ENCODE measurements at regions of chr11 and their contacts with region 1.

Region 1: DNA sequence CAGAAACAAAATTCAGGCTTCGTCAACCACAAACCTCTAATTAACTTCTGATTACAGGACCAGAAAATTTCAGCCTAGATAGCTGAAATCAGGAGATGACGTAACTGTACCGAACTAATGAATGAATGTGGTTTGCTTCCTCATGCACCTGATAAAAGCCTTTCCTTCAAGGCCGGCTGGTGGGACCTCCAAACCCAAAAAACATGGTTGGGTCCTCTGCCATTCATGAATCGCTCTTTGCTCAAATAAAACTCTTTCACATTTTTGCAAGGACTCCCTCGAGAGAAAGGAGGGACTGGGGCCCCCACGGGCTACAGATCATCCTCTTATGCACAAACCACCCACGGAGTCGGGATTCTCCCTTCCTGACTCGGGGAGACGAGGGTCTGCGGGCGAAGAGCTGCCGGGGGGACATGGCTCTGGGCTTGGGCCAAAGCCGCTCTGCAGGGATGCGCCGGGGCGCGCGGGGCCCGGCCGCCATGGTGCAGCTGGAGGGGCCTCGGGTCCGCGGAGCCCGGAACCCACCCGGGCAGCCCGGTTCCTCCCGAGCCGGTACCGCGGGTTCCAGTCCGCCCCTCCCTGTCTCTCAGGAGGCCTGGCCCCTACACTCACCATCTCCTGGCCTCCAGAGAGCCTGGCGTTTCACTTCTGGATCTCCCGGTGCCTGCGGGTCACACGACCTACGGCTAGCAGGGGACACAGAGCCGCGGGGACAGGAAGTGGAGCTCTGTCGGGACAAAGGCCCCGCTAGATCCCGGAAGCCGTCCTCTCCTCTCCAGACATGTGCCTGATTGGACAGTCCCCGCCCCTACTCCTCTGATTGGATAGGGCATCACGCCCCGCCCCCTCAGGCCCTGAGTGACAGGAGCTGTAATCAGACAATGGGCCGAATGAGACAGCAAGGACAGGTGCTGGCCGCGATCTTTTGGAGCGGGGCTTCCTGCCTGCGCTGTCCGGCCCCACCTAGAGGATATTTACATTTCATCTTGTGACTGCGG is at the start of gene ZNF195:
- DNase-seq: peak; percentile 100
- H3K4me3 Mint-ChIP-seq: peak within 1 kb of the TSS; percentile 97
- H3K27ac Mint-ChIP-seq: peak within 1 kb of the TSS; percentile 94
- H3K4me1 Mint-ChIP-seq: peaks cover 48% of the 10 kb centered on the region
- H3K27me3 Mint-ChIP-seq: no peaks in the 10 kb centered on the region
- total RNA-seq, gene ZNF195: 26.7 to 29.2 TPM

Region 2: GRCh38 chr11:3359092-3359824 is 19.5 kb before region 1 on chr11:
- CTCF ChIA-PET with region 1: no interaction called
- intact Hi-C with region 1: loop called (anchors 2 kb)
- DNase-seq: no peak
- H3K4me3 Mint-ChIP-seq: no peak overlapping the region
- H3K27ac Mint-ChIP-seq: no peak overlapping the region
- H3K4me1 Mint-ChIP-seq: no peaks in the 10 kb centered on the region
- H3K27me3 Mint-ChIP-seq: no peaks in the 10 kb centered on the region

Region 3: DNA sequence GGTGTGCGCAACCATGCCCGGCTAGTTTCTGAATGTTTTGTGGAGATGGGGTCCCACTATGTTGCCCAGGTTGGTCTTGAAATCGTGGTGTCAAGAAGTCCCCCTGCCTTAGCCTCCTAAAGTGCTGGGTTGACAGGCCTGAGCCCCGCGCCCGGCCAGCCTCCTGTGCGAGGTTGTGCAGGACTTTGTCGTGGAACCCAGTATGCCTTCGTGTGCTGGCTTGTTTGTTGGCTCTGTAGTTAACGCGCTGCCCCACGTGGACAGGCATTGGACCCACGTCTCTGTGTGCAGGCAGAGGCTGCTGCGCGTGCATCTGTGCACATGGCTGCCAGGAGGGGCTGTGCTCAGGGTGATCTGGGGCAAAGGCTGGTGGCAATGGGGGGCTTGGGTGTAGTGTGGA is 34.1 kb after region 1 on chr11:
- CTCF ChIA-PET with region 1: interaction called, 17 read pairs
- intact Hi-C with region 1: loop called (anchors 2 kb)
- DNase-seq: no peak
- H3K4me3 Mint-ChIP-seq: no peak overlapping the region
- H3K27ac Mint-ChIP-seq: no peak overlapping the region
- H3K4me1 Mint-ChIP-seq: peaks cover 2% of the 10 kb centered on the region
- H3K27me3 Mint-ChIP-seq: no peaks in the 10 kb centered on the region

Region 4: GRCh38 chr11:3605771-3606203 is 227.1 kb after region 1 on chr11:
- CTCF ChIA-PET with region 1: no interaction called
- intact Hi-C with region 1: no loop called
- DNase-seq: no peak
- H3K4me3 Mint-ChIP-seq: no peak overlapping the region
- H3K27ac Mint-ChIP-seq: no peak overlapping the region
- H3K4me1 Mint-ChIP-seq: no peaks in the 10 kb centered on the region
- H3K27me3 Mint-ChIP-seq: no peaks in the 10 kb centered on the region